Dendritic cell treated with granulocyte-macrophage colony-stimulating factor and Interleukin-4, amounts not matched to agents 40 ng/mL and 50 ng/mL, for 4 days (primary cell): ENCODE measurements at regions of chr7 and their contacts with region 1.

Region 1: GRCh38 chr7:16645593-16646471 is at the starts of genes ANKMY2 and BZW2:
- H3K4me3 Mint-ChIP-seq: peak within 1 kb of the TSS; percentile 91
- H3K27ac Mint-ChIP-seq: peak within 1 kb of the TSS; percentile 93
- H3K4me1 Mint-ChIP-seq: peaks cover 47% of the 10 kb centered on the region
- H3K27me3 Mint-ChIP-seq: no peaks in the 10 kb centered on the region

Region 2: GRCh38 chr7:16668049-16668858 is 22.4 kb after region 1 on chr7:
- intact Hi-C with region 1: loop called (anchors 2 kb)
- H3K4me3 Mint-ChIP-seq: no peak overlapping the region
- H3K27ac Mint-ChIP-seq: peak overlapping the region; percentile 75
- H3K4me1 Mint-ChIP-seq: peaks cover 42% of the 10 kb centered on the region
- H3K27me3 Mint-ChIP-seq: no peaks in the 10 kb centered on the region

Region 3: DNA sequence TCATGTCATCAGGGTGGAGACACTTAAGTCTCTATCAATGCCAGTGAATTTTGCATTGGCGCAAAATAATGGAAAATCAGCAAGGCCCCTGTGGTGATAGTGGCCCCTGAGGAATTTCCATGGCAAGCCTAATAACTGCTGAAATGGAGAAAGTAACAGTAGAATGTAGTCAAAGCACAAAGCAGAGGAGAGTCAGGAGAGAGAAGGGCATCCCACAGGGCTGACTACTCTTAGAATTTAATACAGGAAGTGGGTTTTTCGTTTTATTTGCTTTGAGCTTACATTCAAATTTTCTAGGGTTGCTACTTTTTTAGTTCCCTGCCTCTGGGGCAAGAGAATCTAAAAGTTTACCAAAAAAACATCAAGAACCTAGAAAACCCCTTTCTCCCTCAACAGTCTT is 39.1 kb after region 1 on chr7:
- intact Hi-C with region 1: loop called (anchors 5 kb)
- H3K4me3 Mint-ChIP-seq: no peak overlapping the region
- H3K27ac Mint-ChIP-seq: no peak overlapping the region
- H3K4me1 Mint-ChIP-seq: no peaks in the 10 kb centered on the region
- H3K27me3 Mint-ChIP-seq: no peaks in the 10 kb centered on the region